Activated CD4-positive, alpha-beta memory T cell treated with anti-CD3 and anti-CD28 coated beads, Interleukin-2, amount 10 ng/mL, durations not matched to agents 7 days and 5 days (primary cell): ENCODE measurements at regions of chr17 and their contacts with region 1.

Region 1: GRCh38 chr17:1122533-1123392 is 57.0 kb downstream of the ABR start:
- DNase-seq: peak; percentile 86
- H3K4me3 Mint-ChIP-seq: no peak overlapping the region
- H3K27ac Mint-ChIP-seq: peak overlapping the region; percentile 66
- H3K4me1 Mint-ChIP-seq: peaks cover 25% of the 10 kb centered on the region
- H3K27me3 Mint-ChIP-seq: no peaks in the 10 kb centered on the region

Region 2: DNA sequence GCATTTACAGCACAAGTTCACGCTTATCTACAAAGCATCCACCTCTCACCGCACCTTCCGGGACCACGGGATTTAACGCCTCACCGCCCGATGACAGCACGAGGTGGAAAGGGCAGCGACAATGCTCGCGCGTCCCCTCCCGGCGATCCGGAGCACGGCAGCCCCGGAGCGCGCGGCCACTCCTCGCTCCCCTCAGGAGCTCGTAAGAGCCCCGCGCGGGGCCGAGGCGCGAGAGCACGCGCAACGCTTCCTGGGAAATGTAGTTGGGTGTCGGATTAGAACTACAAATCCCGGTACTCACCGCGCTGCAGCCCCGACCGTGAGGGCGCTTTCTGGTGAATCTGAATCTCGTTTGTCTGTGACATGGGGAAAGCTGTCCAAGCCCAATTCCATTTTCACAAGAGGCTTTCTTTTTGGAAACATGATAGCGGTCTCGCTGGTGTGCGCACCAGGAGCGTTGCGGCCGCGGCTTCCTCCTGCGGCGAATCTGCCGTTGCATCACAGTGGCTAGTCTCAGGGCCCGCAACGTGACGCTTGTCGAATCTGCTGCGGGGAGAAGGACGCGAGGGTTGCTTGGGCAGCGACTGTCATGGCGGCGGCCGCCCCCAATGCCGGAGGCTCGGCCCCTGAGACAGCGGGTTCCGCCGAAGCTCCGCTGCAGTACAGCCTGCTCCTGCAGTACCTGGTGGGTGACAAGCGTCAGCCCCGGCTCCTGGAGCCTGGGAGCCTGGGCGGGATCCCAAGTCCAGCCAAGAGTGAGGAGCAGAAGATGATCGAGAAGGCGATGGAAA is 126.0 kb before region 1 on chr17 and contains the start of gene TIMM22:
- CTCF ChIA-PET with region 1: no interaction called
- POLR2A ChIA-PET with region 1: no interaction called
- DNase-seq: peak; percentile 94
- H3K4me3 Mint-ChIP-seq: peak within 1 kb of the TSS; percentile 91
- H3K27ac Mint-ChIP-seq: peak within 1 kb of the TSS; percentile 83
- H3K4me1 Mint-ChIP-seq: peaks cover 25% of the 10 kb centered on the region
- H3K27me3 Mint-ChIP-seq: no peaks in the 10 kb centered on the region
- total RNA-seq, gene TIMM22: 8.1 to 8.2 TPM

Region 3: GRCh38 chr17:1058423-1059130 is 64.2 kb before region 1 on chr17:
- CTCF ChIA-PET with region 1: interaction called, 24 read pairs
- POLR2A ChIA-PET with region 1: no interaction called
- DNase-seq: peak; percentile 74
- H3K4me3 Mint-ChIP-seq: no peak overlapping the region
- H3K27ac Mint-ChIP-seq: no peak overlapping the region
- H3K4me1 Mint-ChIP-seq: peaks cover 14% of the 10 kb centered on the region
- H3K27me3 Mint-ChIP-seq: no peaks in the 10 kb centered on the region

Region 4: DNA sequence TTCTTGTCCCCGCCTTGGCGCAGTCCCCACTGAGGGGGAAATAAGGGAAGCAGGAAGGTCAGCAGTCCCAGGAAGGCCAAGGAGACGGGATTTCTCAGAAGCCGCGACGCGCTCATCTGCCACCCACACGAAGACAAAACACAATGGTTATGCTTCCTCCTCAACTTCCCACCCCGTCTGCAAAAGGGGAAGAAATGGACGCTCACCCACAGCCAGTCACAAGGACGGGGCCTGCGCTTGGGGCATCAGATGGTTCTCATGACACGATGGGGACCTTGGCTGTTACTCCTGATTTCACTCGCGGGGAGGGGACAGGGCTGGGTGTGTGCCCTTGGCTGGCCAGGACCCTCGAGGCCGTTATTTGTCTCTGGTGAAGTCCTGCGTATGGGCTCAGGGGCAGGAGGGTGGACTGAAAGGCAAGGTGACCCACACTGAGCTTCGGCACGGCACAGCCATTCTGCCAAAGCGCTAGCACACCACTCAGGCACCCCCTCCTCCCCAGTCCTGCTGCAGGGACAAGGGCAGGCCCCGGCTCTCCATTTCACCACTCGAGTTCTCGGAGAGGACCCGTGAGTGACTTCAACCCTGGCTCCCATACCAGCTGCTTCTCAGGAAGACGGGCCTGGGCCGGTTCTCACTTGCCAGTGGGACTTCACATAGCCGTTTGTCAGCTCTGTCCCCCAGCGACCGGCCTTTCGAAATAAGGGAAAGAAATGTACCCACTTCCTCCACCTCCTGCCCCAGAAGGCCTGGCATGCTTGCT is 27.5 kb before region 1 on chr17:
- CTCF ChIA-PET with region 1: interaction called, 11 read pairs
- POLR2A ChIA-PET with region 1: interaction called, 3 read pairs
- DNase-seq: no peak
- H3K4me3 Mint-ChIP-seq: no peak overlapping the region
- H3K27ac Mint-ChIP-seq: peak overlapping the region; percentile 47
- H3K4me1 Mint-ChIP-seq: peaks cover 48% of the 10 kb centered on the region
- H3K27me3 Mint-ChIP-seq: no peaks in the 10 kb centered on the region

Region 5: GRCh38 chr17:1108861-1109605 is 13.7 kb before region 1 on chr17:
- CTCF ChIA-PET with region 1: interaction called, 10 read pairs
- POLR2A ChIA-PET with region 1: interaction called, 3 read pairs
- DNase-seq: peak; percentile 78
- H3K4me3 Mint-ChIP-seq: peak overlapping the region; percentile 85
- H3K27ac Mint-ChIP-seq: peak overlapping the region; percentile 81
- H3K4me1 Mint-ChIP-seq: peaks cover 55% of the 10 kb centered on the region
- H3K27me3 Mint-ChIP-seq: no peaks in the 10 kb centered on the region

Region 6: DNA sequence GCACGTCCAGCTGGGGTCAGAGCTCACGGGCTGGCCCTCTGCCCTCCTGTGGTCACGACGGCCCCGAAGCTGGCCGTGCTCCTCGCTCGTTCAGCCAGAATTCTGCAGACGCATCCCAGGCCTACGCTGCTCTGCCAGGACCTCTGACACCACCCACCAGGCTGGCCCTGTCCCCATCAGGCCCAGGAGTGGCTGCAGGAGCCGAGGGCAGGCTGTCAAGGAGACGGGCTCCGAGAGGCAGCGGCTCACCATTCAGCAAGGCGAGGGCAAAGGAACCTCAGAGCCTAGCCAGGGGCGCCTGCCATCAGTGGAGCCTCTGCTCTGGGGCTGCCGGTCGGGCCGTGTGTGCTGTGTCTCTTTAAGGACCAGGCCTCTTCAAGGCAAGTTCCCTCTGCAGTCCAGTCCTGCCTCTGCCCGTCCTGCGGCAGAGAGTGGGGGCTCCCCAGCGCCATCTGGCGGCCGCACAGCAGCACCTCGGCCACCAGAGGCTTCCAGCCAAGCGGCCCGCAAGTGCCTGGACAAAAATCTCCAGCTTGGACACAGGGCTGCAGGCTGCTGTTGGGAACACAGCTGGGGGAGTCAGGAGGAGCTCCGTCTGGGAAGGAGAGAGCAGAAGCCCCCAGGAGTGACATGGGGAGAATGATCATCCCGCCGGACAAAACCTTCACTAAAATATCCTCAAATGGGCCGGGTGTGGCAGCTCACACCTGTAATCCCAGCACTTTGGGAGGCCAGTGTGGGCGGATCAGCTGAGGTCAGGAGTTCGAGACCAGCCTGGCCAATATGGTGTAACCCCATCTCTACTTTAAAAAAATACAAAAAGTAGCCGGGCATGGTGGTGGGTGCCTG is 64.4 kb after region 1 on chr17:
- CTCF ChIA-PET with region 1: interaction called, 79 read pairs
- POLR2A ChIA-PET with region 1: interaction called, 5 read pairs
- DNase-seq: peak; percentile 80
- H3K4me3 Mint-ChIP-seq: no peak overlapping the region
- H3K27ac Mint-ChIP-seq: no peak overlapping the region
- H3K4me1 Mint-ChIP-seq: peaks cover 7% of the 10 kb centered on the region
- H3K27me3 Mint-ChIP-seq: peaks cover 20% of the 10 kb centered on the region